ENCODE measurements at regions of chr6 and their contacts with region 1.

Region 1: DNA sequence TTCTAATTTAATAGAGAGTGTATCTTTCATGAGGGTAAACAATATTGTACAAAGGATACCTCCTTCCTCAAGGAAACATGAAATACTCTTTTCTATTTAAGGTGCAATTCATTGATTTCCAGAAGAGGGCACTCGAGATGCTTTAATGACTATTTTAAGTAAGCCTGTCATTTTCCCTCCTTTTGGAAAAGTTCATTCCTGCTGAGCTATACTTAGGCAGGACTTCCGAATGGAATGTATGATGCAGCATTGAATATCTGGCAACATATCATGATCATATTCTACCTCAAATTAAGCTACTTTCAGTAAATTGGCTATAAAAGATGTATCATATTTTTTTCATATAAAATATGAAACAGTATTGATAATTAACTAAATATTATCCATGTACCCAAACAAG is 5.0 kb downstream of the DST start:
- DNase-seq: peak; percentile 37
- H3K4me3 ChIP-seq: no peak overlapping the region
- CTCF ChIP-seq: peak; percentile 43

Region 2: DNA sequence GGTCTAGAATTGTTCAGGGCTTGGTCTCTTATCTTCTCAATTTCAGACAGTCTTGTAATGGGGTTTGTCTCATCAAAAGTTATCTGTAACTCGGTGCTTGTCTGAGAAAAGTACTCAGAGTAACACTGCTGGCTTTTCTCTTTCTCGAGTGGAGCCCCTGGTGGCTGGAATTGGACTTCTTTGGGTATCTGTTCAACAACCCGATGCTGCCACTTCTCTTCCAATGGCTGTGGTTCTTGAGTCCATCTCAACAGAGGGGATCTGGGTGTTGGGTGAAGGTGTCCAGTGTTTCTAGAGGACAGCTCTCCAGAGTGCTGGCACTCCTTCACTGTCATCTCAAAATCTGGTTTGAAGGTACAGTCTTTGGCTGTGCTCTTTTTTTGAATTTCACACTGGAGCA is 19.6 kb before region 1 on chr6:
- CTCF ChIA-PET with region 1: interaction called, 15 read pairs
- POLR2A ChIA-PET with region 1: no interaction called
- DNase-seq: no peak
- H3K4me3 ChIP-seq: no peak overlapping the region
- CTCF ChIP-seq: no peak

Region 3: GRCh38 chr6:56624046-56624727 is 13.5 kb before region 1 on chr6:
- CTCF ChIA-PET with region 1: interaction called, 30 read pairs
- POLR2A ChIA-PET with region 1: no interaction called
- DNase-seq: no peak
- H3K4me3 ChIP-seq: no peak overlapping the region
- CTCF ChIP-seq: no peak

Region 4: GRCh38 chr6:56699066-56699654 is 61.5 kb after region 1 on chr6:
- CTCF ChIA-PET with region 1: interaction called, 101 read pairs
- POLR2A ChIA-PET with region 1: no interaction called
- DNase-seq: no peak
- H3K4me3 ChIP-seq: no peak overlapping the region
- CTCF ChIP-seq: peak; percentile 30

Region 5: DNA sequence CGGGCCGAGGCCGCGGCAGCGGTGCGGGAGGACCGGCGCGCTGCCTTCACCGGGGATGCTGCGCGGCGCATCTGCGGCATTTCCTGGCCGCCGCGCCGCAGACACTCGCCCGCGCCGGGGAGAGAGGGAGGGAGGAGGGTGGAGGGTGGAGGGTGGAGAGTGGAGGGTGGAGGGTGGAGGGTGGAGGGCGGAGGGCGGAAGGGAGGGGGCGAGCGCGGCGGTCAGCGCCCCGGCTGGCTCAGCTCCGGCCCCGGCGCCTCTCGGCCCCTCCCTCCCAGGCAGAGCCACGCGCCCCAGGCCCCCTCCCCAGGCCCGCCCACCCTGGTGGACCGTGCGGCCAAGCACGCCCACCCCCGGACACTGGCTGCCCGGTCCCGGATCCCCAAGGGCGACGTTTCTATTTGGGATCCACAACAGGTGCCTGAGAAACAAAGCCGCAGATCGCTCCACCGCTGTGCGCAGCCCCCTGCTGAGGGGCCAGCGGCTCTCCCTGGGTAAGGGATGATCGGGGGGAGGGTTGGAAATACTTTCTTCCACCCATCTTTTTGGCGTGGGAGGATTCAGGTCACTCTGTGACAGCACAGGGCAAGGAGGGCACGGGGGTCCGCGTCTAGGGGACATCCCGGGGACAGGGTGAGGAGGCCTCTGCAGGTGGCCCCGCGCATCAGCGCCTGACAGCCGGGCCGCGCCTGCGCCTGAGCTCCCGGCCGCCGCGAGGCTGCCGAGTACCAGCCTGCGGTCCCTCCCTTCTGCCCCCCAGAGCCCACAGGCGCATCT is 206.1 kb after region 1 on chr6:
- CTCF ChIA-PET with region 1: interaction called, 12 read pairs
- POLR2A ChIA-PET with region 1: no interaction called
- DNase-seq: no peak
- H3K4me3 ChIP-seq: peak overlapping the region; percentile 75
- CTCF ChIP-seq: peak; percentile 80

Region 6: DNA sequence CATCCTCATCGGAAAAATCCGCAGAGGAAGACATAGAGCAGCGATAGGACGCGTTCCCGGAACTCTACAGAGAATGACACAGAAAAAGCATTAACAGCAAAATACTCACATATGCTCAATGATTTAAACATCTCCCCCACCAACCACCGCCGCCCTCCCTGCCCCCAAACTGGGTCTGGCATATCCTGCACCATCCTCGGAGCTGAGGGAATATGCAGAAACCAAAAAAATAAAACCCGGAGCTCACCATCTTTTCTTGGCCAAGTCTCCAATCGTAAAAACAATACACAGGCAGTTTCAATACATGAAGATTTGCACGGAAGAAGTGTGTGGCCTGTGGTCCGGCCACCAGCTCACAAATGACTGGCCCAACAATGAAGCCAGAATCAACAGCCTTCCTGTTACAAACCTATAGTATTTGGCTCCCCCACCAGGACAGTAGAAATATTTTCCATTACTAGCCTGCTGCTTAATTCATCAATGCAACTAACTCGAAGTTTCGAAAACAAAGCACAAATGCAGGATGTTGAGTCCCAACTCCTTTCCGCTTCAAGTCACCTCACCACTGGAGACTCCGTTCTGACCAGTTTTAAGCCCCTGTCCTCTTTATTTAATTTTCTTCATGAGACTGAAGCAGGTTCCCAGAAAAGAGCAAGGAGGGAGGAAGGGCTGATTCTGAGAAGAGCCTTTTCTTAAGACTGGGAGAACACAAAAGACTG is 214.1 kb after region 1 on chr6:
- CTCF ChIA-PET with region 1: interaction called, 50 read pairs
- POLR2A ChIA-PET with region 1: no interaction called
- DNase-seq: no peak
- H3K4me3 ChIP-seq: peak overlapping the region; percentile 74
- CTCF ChIP-seq: peak; percentile 60